ENCODE measurements at regions of chr3 and their contacts with region 1.

Region 1: GRCh38 chr3:153026026-153026425 is 136.0 kb upstream of the RAP2B start:
- DNase-seq: peak in 1 of 2 experiments; percentile 53
- H3K4me3 ChIP-seq: no peak overlapping the region
- H3K4me1 ChIP-seq: no peaks in the 10 kb centered on the region
- H3K27me3 ChIP-seq: no peaks in the 10 kb centered on the region; the same call in 1 of the 2 replicates

Region 2: DNA sequence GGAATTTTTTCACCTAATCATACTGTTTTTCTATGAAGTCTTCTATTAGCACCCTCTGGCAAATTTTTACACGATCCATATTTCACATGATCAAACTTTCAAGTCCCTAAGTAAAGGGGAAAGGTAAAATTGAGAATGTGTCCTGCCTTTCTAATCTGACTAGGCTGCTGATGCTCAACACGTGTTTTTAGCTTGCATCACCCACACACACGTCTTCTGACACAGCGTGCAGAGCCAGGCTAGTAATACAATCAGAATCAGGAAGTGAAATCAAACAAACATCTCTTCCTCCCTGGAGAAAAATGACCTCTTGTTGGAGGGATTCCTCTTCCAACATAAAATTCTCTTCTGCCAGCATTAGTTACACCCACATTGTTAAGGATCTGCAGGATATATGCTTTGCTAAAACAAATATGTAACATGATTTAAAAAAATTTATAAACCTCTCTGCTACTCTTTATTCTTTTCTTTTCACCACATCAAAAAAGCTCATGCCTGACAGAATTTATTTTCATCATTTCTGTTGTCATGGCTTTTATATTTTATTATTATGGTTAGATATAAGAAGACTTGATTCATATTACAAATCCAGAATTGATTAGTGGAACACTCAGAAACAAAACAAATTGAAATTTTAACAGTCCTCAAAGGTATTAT is 258.4 kb after region 1 on chr3:
- in situ Hi-C with region 1: loop called (anchors 25 kb)
- DNase-seq: no peak
- H3K4me3 ChIP-seq: no peak overlapping the region
- H3K4me1 ChIP-seq: no peaks in the 10 kb centered on the region
- H3K27me3 ChIP-seq: no peaks in the 10 kb centered on the region

Region 3: GRCh38 chr3:153768561-153769469 is 742.8 kb after region 1 on chr3:
- in situ Hi-C with region 1: loop called (anchors 25 kb)
- DNase-seq: peak; percentile 60 to 61
- H3K4me3 ChIP-seq: no peak overlapping the region
- H3K4me1 ChIP-seq: no peaks in the 10 kb centered on the region
- H3K27me3 ChIP-seq: no peaks in the 10 kb centered on the region

Region 4: GRCh38 chr3:153970741-153971347 is 944.8 kb after region 1 on chr3:
- in situ Hi-C with region 1: loop called (anchors 25 kb)
- DNase-seq: peak in 1 of 2 experiments; percentile 38
- H3K4me3 ChIP-seq: no peak overlapping the region
- H3K4me1 ChIP-seq: no peaks in the 10 kb centered on the region; the same call in 1 of the 2 replicates
- H3K27me3 ChIP-seq: no peaks in the 10 kb centered on the region